ENCODE measurements at regions of chr9 and their contacts with region 1.

Region 1: GRCh38 chr9:101311758-101312420 is 72.9 kb downstream of the BAAT start:
- DNase-seq: peak; percentile 55 to 89
- ATAC-seq: peak; percentile 72 to 83; a peak in 4 of 6 replicates
- H3K4me3 ChIP-seq: no peak overlapping the region
- H3K27ac ChIP-seq: peak overlapping the region; percentile 78 to 82
- H3K4me1 ChIP-seq: peaks cover 40% of the 10 kb centered on the region
- CTCF ChIP-seq: peak; percentile 82
- EP300 ChIP-seq: no peak
- POLR2A ChIP-seq: no peak
- RAD21 ChIP-seq: peak; percentile 84 to 90

Region 2: DNA sequence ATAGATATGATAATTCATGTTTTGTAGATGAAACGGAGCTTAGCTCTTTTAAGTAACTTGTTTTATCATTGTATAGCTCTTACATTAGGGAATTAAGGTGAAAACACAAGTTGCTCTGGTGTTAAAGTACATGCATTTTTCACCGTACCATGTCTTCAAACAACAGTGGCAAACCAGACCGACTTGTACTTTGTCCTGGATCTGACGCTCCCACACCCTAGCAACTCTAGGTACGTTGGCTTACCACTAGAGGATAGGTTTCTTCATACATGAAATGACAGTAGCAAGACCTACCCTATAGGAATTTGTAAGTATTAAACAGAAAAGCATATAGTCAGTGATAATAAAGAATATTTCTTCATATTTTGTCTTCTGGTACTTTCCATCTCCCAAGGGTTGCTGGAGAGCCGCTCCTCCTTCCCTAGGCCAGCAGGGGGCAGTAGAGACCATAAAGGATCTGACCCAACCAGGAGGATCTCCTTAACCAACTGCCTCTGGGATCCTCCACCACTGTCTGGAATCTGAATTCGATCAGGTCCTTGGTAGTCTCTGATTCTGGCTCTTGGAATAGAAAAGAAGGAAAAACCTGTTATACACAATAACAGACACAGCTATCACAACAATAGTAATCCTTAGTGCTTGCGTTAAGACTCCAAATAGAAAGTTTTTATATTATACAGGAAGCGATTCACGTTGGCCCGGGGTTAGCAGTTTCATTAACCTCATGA is 597.4 kb before region 1 on chr9:
- CTCF ChIA-PET with region 1: interaction called, 11 read pairs
- POLR2A ChIA-PET with region 1: no interaction called
- DNase-seq: peak; percentile 56 to 66
- ATAC-seq: peak; percentile 90 to 94
- H3K4me3 ChIP-seq: no peak overlapping the region
- H3K27ac ChIP-seq: no peak overlapping the region
- H3K4me1 ChIP-seq: no peaks in the 10 kb centered on the region
- CTCF ChIP-seq: peak; percentile 72
- EP300 ChIP-seq: no peak
- POLR2A ChIP-seq: no peak
- RAD21 ChIP-seq: peak; percentile 64 to 75

Region 3: GRCh38 chr9:101018467-101018866 is 293.4 kb before region 1 on chr9:
- CTCF ChIA-PET with region 1: no interaction called
- POLR2A ChIA-PET with region 1: no interaction called
- DNase-seq: no peak
- ATAC-seq: no peak
- H3K4me3 ChIP-seq: no peak overlapping the region
- H3K27ac ChIP-seq: no peak overlapping the region
- H3K4me1 ChIP-seq: no peaks in the 10 kb centered on the region
- CTCF ChIP-seq: no peak
- EP300 ChIP-seq: no peak
- POLR2A ChIP-seq: no peak
- RAD21 ChIP-seq: no peak

Region 4: GRCh38 chr9:101119206-101119819 is 192.6 kb before region 1 on chr9:
- CTCF ChIA-PET with region 1: interaction called, 28 read pairs
- POLR2A ChIA-PET with region 1: no interaction called
- DNase-seq: peak; percentile 33 to 58
- ATAC-seq: peak; percentile 99 to 100
- H3K4me3 ChIP-seq: no peak overlapping the region
- H3K27ac ChIP-seq: no peak overlapping the region
- H3K4me1 ChIP-seq: no peaks in the 10 kb centered on the region
- CTCF ChIP-seq: peak; percentile 81
- EP300 ChIP-seq: no peak
- POLR2A ChIP-seq: no peak
- RAD21 ChIP-seq: peak; percentile 87 to 88

Region 5: DNA sequence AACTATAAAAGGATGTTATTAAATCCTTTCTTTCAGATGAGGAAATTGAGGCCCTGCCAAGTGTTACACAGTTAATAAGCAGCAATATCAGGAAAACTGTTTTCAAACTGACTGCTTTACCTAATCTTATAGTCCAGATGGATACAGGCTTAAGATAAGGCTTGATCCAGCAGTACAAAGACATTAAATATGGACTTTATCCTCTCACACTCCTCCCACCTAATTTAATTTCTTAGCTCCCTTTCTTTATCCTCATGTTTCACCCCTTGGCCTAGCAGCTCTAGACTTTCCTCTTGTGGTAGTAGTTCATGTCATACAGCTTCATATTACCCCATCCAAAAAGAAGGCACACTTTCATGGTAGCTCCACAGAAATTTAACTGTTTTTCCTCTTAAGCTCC is 91.5 kb before region 1 on chr9:
- CTCF ChIA-PET with region 1: no interaction called
- POLR2A ChIA-PET with region 1: no interaction called
- DNase-seq: no peak
- ATAC-seq: no peak
- H3K4me3 ChIP-seq: no peak overlapping the region
- H3K27ac ChIP-seq: no peak overlapping the region
- H3K4me1 ChIP-seq: no peaks in the 10 kb centered on the region
- CTCF ChIP-seq: no peak
- EP300 ChIP-seq: no peak
- POLR2A ChIP-seq: no peak
- RAD21 ChIP-seq: no peak

Region 6: DNA sequence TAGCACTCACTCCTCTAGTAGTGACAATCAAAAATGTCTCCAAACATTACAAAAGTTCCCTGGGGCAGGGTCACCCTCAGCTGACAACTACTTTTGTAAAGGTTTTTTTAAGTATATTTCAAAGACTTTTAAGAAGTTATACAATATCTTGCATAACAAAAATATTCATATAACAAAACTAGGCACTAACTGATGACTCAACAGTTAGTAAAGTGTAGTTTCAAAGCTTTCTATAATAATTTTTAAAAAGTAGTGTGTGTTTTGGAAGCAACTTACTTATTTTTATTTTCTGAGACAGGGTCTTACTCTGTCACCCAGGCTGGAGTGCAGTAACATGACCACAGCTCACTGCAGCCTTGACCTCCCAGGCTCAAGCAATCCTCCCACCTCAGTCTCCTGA is 12.0 kb before region 1 on chr9:
- CTCF ChIA-PET with region 1: interaction called, 25 read pairs
- POLR2A ChIA-PET with region 1: no interaction called
- DNase-seq: no peak
- ATAC-seq: no peak
- H3K4me3 ChIP-seq: no peak overlapping the region
- H3K27ac ChIP-seq: no peak overlapping the region
- H3K4me1 ChIP-seq: no peaks in the 10 kb centered on the region
- CTCF ChIP-seq: no peak
- EP300 ChIP-seq: no peak
- POLR2A ChIP-seq: no peak
- RAD21 ChIP-seq: no peak

Region 7: DNA sequence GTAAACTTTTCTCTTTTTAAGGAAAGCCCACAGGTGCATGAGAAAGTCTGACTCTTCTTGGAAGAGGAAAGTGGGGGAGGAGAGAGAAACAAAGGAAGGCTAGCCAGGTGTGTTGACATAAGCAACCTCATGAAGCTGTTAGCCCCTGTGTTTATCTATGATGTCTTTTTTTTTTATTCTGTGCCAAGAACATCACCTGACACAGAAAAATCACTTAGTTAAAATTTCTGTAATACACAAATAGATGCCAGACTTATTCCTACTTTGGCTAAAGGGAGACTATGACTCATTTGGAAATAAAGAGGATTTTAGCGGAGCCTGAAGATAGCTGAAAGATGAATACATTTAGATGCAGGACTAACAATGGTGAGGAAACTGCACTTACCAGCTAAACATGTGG is 14.6 kb after region 1 on chr9:
- CTCF ChIA-PET with region 1: interaction called, 39 read pairs
- POLR2A ChIA-PET with region 1: no interaction called
- DNase-seq: peak in 1 of 2 experiments; percentile 73
- ATAC-seq: peak; percentile 59 to 63; a peak in 5 of 6 replicates
- H3K4me3 ChIP-seq: 0 out of 3 replicates have a peak overlapping the region, but pooled peaks have one; percentile 5
- H3K27ac ChIP-seq: peak overlapping the region; percentile 92
- H3K4me1 ChIP-seq: peaks cover 51% of the 10 kb centered on the region
- CTCF ChIP-seq: no peak
- EP300 ChIP-seq: peak; percentile 85; a peak in 4 of 5 replicates
- POLR2A ChIP-seq: no peak
- RAD21 ChIP-seq: peak in 1 of 2 experiments; percentile 49; a peak in 2 of 5 replicates

Measured in A549 (cell line).